ENCODE measurements at regions of chr7 and their contacts with region 1.

Region 1: GRCh38 chr7:92833024-92833765 is 3.2 kb downstream of the CDK6 start:
- DNase-seq: peak; percentile 82
- H3K4me3 ChIP-seq: peak overlapping the region; percentile 83 to 87 (median 83)
- H3K27ac ChIP-seq: peak overlapping the region; percentile 94
- H3K4me1 ChIP-seq: peaks cover 35% of the 10 kb centered on the region
- H3K27me3 ChIP-seq: no peaks in the 10 kb centered on the region
- CTCF ChIP-seq: peak; percentile 71 to 91

Region 2: GRCh38 chr7:92621026-92621540 is 212.1 kb before region 1 on chr7:
- CTCF ChIA-PET with region 1: interaction called, 4 read pairs
- dilution Hi-C with region 1: no loop called
- in situ Hi-C with region 1: loop called (anchors 5 to 10 kb)
- intact Hi-C with region 1: loop called (anchors 1 kb)
- DNase-seq: peak; percentile 78
- H3K4me3 ChIP-seq: no peak overlapping the region
- H3K27ac ChIP-seq: peak overlapping the region; percentile 54
- H3K4me1 ChIP-seq: peaks cover 36% of the 10 kb centered on the region
- H3K27me3 ChIP-seq: no peaks in the 10 kb centered on the region
- CTCF ChIP-seq: peak; percentile 67 to 72

Region 3: DNA sequence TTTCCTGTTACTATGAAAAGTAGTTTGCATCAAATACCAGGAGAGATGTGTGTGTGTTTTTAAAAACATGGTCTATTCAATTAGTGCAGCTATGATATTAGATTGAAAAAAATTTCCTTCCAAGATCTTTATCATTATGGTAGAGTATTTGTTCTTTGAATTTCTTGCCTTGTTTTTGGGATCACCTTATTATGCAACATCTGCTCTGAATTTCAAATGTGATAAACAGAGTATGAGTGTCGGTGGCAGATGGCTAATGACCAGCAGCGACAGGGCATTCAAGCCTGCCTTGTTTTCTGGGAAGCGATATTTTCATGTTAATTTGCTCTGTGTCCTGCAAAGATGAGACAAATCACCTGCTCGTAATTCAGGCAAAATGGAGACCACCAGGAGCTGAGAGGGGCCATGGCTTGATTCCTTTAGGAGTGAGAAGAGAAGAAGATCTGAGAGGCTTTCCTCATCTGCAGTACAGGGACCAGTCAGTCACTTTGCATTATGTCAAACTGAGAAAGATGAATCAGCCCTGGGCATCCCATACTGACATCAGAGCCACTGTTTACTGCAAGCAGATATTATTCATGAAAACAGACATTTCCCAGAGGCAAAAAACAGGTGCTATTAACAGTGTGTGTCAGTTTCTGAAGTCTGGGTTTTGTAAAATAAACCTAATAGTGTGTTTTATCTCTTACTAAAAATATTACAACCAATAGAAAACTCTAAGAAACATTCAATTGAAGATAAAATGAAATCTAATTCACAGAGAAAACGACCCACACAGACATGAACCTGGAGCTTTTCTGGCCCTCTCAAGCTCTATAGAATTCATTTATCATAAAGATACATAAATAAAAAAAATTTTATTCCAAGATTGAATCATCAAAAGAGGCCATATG is 64.4 kb before region 1 on chr7:
- CTCF ChIA-PET with region 1: interaction called, 4 read pairs
- dilution Hi-C with region 1: no loop called
- in situ Hi-C with region 1: no loop called
- intact Hi-C with region 1: loop called (anchors 2 kb)
- DNase-seq: peak; percentile 71
- H3K4me3 ChIP-seq: no peak overlapping the region
- H3K27ac ChIP-seq: no peak overlapping the region
- H3K4me1 ChIP-seq: peaks cover 42% of the 10 kb centered on the region
- H3K27me3 ChIP-seq: no peaks in the 10 kb centered on the region
- CTCF ChIP-seq: no peak

Region 4: DNA sequence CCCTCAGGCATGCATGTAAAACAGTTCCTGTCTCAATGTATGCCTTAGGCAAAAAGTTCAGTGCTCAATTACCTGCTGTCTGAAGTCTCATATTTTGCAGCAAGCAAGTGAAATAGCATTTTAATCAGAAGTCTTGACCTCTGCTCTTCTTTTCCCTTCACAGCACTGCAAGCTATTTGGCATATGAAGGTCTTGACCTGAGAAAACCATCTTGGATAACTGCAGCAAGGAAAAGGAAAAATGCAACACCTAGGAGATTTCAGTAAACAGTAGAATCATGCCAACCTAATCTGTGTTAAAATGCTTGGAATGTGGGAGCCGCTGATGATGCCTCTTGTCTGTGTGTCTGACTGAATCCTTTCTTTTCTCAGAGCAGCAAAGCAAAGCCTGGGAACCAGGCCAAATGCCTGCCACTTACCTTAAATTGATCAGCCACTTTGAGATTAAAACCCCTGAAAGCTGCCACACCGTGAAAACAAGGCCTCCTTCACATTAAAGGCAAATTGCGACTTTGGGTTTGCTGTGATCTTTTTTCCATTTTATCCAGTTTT is 83.6 kb after region 1 on chr7:
- CTCF ChIA-PET with region 1: no interaction called
- dilution Hi-C with region 1: no loop called
- in situ Hi-C with region 1: loop called in 1 of 2 experiments (anchors 10 kb)
- intact Hi-C with region 1: loop called (anchors 1 kb)
- DNase-seq: peak; percentile 78
- H3K4me3 ChIP-seq: no peak overlapping the region
- H3K27ac ChIP-seq: peak overlapping the region; percentile 92
- H3K4me1 ChIP-seq: peaks cover 13% of the 10 kb centered on the region
- H3K27me3 ChIP-seq: no peaks in the 10 kb centered on the region
- CTCF ChIP-seq: no peak

Region 5: GRCh38 chr7:92988051-92988450 is 154.9 kb after region 1 on chr7:
- CTCF ChIA-PET with region 1: no interaction called
- dilution Hi-C with region 1: no loop called
- in situ Hi-C with region 1: loop called (anchors 10 kb)
- intact Hi-C with region 1: loop called (anchors 1 kb)
- DNase-seq: peak; percentile 74
- H3K4me3 ChIP-seq: no peak overlapping the region
- H3K27ac ChIP-seq: peak overlapping the region; percentile 43
- H3K4me1 ChIP-seq: peaks cover 15% of the 10 kb centered on the region
- H3K27me3 ChIP-seq: no peaks in the 10 kb centered on the region
- CTCF ChIP-seq: peak; percentile 55 to 67

Region 6: DNA sequence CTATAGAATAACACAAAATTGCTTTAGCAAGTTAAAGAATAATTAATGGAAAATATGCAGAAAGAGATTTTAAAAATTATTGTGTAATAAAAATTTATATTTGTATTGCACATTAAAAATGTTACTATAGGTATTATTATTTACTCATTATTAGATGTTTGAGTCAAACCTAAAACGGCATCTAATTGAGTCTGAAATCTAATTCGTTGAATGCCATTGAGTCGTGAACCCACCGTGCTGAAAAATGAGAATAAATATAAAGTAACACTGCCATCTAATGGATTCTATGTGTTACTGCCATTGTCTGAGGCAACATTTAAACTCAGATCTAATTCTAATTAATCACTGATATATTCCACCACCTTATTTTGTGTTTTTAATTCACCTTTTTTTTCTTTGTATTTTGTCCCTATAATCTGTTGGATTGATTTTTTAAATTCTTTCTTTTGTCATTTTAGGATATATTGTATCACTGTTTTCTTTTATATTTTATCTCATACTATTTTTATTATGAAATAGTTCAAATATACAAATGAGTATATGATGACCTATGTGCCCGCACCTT is 222.4 kb after region 1 on chr7:
- CTCF ChIA-PET with region 1: interaction called, 21 read pairs
- dilution Hi-C with region 1: no loop called
- in situ Hi-C with region 1: loop called (anchors 5 to 10 kb)
- intact Hi-C with region 1: loop called (anchors 1 kb)
- DNase-seq: peak; percentile 24
- H3K4me3 ChIP-seq: no peak overlapping the region
- H3K27ac ChIP-seq: no peak overlapping the region
- H3K4me1 ChIP-seq: no peaks in the 10 kb centered on the region
- H3K27me3 ChIP-seq: no peaks in the 10 kb centered on the region
- CTCF ChIP-seq: peak; percentile 61 to 81